Prostate gland (tissue), 2 donors: ENCODE measurements at regions of chr17 and their contacts with region 1.

Region 1: DNA sequence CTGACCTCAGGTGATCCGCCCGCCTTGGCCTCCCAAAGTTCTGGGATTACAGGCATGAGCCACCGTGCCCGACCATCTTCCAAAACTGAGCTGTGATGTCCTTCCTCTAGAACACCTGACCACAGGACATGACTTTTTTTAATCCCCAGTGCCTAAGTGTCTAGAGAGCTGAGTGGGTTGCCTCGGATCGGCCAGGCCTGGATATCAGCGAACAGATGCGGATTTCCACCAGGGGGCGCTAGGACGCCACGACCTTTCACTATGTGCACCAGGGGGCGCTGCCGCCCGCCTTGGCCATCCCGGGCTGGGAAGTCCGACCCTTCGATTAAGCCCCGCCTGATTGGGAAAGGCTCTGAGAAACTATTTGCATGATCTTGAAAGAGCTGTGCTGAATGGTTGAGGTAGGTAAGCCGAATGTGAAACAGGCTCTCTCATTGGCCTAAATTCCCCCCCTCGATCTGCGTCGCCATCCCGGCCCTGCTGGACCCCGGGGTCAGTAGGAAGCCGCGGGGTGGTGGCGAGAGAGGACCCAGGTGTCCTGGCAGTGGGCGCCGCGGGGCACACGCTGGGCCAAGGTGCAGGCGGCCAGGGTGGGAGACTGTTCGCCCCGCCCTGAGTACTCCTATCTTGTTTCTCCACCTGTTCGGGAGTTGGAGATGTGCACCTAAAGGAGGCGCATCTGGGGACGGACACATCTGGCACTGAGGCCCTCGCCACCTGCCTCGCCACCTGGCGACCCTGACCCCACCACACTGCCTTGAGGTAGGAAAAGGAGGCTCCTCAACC is at the start of gene ACBD4:
- DNase-seq: peak; percentile 96
- H3K4me3 ChIP-seq: peak within 1 kb of the TSS; percentile 50 to 67
- H3K27ac ChIP-seq: peak within 1 kb of the TSS; percentile 49 to 82
- H3K4me1 ChIP-seq: peaks cover 6% of the 10 kb centered on the region
- H3K27me3 ChIP-seq: no peaks in the 10 kb centered on the region
- CTCF ChIP-seq: peak; percentile 99 to 100 (median 100)
- POLR2A ChIP-seq: peak; percentile 76
- total RNA-seq, gene ACBD4: 18.8 to 23.3 TPM

Region 2: DNA sequence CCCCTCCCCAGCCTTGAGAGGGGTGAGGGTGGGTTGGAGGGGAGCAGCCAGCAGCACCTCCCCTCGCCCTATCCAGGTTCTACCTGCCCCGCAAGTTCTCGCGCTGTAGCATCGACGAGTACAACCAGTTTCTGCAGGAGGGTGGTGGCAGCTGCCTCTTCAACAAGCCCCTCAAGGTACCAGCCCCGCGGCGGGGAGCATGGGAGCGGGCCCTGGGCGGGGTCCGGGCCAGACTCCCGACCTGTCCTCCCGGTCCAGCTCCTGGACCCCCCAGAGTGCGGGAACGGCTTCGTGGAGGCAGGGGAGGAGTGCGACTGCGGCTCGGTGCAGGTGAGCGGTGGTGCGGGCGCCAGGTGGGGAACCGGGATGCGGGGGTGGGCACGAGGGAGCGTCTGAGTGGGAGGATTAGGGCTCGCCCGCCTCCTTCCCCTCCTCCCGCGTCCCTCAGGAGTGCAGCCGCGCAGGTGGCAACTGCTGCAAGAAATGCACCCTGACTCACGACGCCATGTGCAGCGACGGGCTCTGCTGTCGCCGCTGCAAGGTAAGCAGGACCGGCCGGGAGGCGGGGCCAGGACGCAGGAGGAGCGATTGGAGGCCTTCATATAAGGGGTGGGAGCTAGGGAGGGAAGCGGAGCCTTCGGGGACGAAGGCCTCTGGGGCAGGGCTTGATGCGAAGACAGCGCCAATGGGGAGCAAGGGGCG is 360.1 kb before region 1 on chr17:
- intact Hi-C with region 1: loop called (anchors 5 kb)
- DNase-seq: peak; percentile 97
- H3K4me3 ChIP-seq: peak overlapping the region; percentile 36 to 51
- H3K27ac ChIP-seq: peak overlapping the region; percentile 31 to 77
- H3K4me1 ChIP-seq: no peaks in the 10 kb centered on the region
- H3K27me3 ChIP-seq: no peaks in the 10 kb centered on the region
- CTCF ChIP-seq: peak in 1 of 4 experiments; percentile 3
- POLR2A ChIP-seq: peak; percentile 36

Region 3: DNA sequence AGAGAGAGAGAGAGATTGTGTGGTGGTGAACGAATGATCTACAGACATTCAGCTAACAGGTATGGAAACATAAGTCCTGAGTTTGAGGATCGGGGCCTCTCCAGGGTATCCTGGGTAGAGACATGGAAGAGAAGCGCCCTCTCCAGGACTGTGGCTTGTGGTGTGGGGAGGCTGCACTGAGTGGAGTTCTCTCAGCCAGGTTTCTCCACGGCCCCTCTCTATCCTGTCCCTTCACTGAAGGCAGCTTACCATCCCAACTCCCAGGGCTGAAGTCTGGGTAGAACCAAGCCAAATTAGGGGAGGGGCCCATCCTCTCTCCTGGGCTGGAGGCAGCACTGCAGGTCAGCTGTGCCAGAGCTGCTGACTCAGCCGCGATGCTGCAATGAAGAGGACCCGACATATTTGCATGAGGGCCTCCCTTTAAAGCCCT is 173.4 kb before region 1 on chr17:
- intact Hi-C with region 1: no loop called
- DNase-seq: no peak
- H3K4me3 ChIP-seq: no peak overlapping the region
- H3K27ac ChIP-seq: no peak overlapping the region
- H3K4me1 ChIP-seq: no peaks in the 10 kb centered on the region
- H3K27me3 ChIP-seq: peaks cover 13% of the 10 kb centered on the region
- CTCF ChIP-seq: no peak
- POLR2A ChIP-seq: no peak

Region 4: GRCh38 chr17:45021607-45022287 is 113.6 kb before region 1 on chr17:
- intact Hi-C with region 1: loop called (anchors 2 kb)
- DNase-seq: peak; percentile 42
- H3K4me3 ChIP-seq: peak overlapping the region; percentile 15 to 25
- H3K27ac ChIP-seq: peak overlapping the region; percentile 58 to 79
- H3K4me1 ChIP-seq: peaks cover 13% of the 10 kb centered on the region
- H3K27me3 ChIP-seq: no peaks in the 10 kb centered on the region
- CTCF ChIP-seq: peak; percentile 85 to 97 (median 91)
- POLR2A ChIP-seq: no peak

Region 5: DNA sequence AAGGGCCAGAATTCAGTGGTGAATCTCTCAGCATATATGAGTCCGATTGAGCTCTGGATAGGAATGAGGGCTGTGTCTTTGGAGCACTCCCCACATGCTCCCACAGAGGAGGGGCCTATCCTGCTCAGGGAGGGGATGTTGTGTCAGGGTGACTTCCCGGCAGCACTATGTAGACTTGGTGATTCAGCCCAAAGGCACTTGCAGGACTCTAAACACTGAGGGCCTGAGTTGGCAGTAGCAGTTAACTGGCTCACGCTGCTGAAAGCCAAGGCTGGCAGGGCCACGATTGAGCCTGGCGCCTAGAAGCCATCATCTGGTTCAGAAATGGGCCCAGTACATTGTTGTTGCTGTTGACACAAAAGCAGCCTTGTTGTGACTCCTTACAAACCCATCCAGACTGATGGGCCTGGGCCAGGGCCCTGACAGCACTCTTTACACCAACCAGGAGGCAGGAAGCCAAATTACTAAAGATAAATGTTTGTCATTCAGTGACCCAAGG is 42.4 kb before region 1 on chr17:
- intact Hi-C with region 1: loop called (anchors 5 kb)
- DNase-seq: peak; percentile 91
- H3K4me3 ChIP-seq: no peak overlapping the region
- H3K27ac ChIP-seq: peak overlapping the region; percentile 77
- H3K4me1 ChIP-seq: peaks cover 6% of the 10 kb centered on the region
- H3K27me3 ChIP-seq: no peaks in the 10 kb centered on the region
- CTCF ChIP-seq: no peak
- POLR2A ChIP-seq: peak; percentile 68

Region 6: GRCh38 chr17:45197555-45198334 is 62.4 kb after region 1 on chr17:
- intact Hi-C with region 1: loop called (anchors 1 kb)
- DNase-seq: peak; percentile 80
- H3K4me3 ChIP-seq: no peak overlapping the region
- H3K27ac ChIP-seq: peak overlapping the region; percentile 44 to 46
- H3K4me1 ChIP-seq: no peaks in the 10 kb centered on the region
- H3K27me3 ChIP-seq: no peaks in the 10 kb centered on the region
- CTCF ChIP-seq: peak; percentile 95 to 99 (median 98)
- POLR2A ChIP-seq: no peak